ENCODE measurements at regions of chrX and their contacts with region 1.

Region 1: GRCh38 chrX:129982274-129983251 is at the start of gene BCORL1:
- DNase-seq: peak; percentile 62 to 89 (median 84)
- ATAC-seq: peak; percentile 96
- H3K4me3 ChIP-seq: peak within 1 kb of the TSS; percentile 61
- H3K4me3 Mint-ChIP-seq: peak within 1 kb of the TSS in 1 of 10 donors; percentile 85
- H3K27ac ChIP-seq: no peak within 1 kb of the TSS
- H3K27ac Mint-ChIP-seq: peak within 1 kb of the TSS in 7 of 9 donors; percentile 31 to 82 (median 59)
- H3K4me1 ChIP-seq: no peaks in the 10 kb centered on the region
- H3K4me1 Mint-ChIP-seq: peaks cover 19 to 34% (median 27%) of the 10 kb centered on the region in 7 donors
- H3K27me3 ChIP-seq: no peaks in the 10 kb centered on the region
- H3K27me3 Mint-ChIP-seq: peaks cover 0 to 30% (median 0%) of the 10 kb centered on the region in 5 donors
- total RNA-seq, gene BCORL1: 5.8 to 8.9 (median 8.2) TPM

Region 2: GRCh38 chrX:129369232-129369631 is 613.3 kb before region 1 on chrX:
- CTCF ChIA-PET with region 1: no interaction called
- POLR2A ChIA-PET with region 1: no interaction called
- intact Hi-C with region 1: no loop called
- DNase-seq: no peak
- ATAC-seq: no peak
- H3K4me3 ChIP-seq: no peak overlapping the region
- H3K4me3 Mint-ChIP-seq: no peak overlapping the region
- H3K27ac ChIP-seq: no peak overlapping the region
- H3K27ac Mint-ChIP-seq: no peak overlapping the region
- H3K4me1 ChIP-seq: no peaks in the 10 kb centered on the region
- H3K4me1 Mint-ChIP-seq: no peaks in the 10 kb centered on the region
- H3K27me3 ChIP-seq: no peaks in the 10 kb centered on the region
- H3K27me3 Mint-ChIP-seq: no peaks in the 10 kb centered on the region

Region 3: DNA sequence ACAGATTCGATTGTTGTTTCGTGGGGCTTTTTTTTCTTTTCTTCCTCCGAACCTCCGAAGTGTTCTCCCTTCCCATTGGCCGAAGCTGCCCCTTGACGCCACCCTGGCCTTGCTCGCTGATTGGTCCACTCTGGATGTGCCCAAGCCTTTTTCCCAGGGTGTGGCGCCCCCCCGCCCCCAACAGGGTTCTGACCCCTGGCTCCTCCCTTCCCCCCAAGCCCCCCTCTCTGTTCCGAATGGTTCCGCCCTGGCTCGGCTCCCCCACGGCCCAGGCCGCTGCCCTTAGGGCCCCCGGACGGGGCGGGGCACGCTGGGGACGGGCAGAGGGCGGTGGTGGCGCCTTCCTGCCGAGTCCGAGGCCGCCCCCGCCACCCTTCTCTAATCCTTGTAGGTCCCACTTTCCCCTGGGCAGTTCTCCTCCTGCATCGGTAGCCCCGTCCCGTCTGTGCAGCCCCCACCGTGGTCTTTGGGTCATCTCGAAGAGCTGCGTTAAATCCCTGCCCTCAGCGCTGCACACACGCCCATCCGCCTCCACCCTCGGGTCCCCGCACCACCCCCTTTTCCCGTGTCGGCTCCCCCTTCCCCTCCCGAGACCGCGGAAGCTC is 51.0 kb before region 1 on chrX:
- CTCF ChIA-PET with region 1: no interaction called
- POLR2A ChIA-PET with region 1: no interaction called
- intact Hi-C with region 1: loop called (anchors 1 kb)
- DNase-seq: peak; percentile 18 to 58 (median 33)
- ATAC-seq: peak; percentile 75
- H3K4me3 ChIP-seq: peak overlapping the region; percentile 61
- H3K4me3 Mint-ChIP-seq: peak overlapping the region; percentile 66 to 89 (median 80)
- H3K27ac ChIP-seq: peak overlapping the region; percentile 59
- H3K27ac Mint-ChIP-seq: peak overlapping the region; percentile 70 to 92 (median 85)
- H3K4me1 ChIP-seq: no peaks in the 10 kb centered on the region
- H3K4me1 Mint-ChIP-seq: peaks cover 0 to 6% (median 5%) of the 10 kb centered on the region in 7 donors
- H3K27me3 ChIP-seq: no peaks in the 10 kb centered on the region
- H3K27me3 Mint-ChIP-seq: peaks cover 0 to 20% (median 0%) of the 10 kb centered on the region in 5 donors

Region 4: DNA sequence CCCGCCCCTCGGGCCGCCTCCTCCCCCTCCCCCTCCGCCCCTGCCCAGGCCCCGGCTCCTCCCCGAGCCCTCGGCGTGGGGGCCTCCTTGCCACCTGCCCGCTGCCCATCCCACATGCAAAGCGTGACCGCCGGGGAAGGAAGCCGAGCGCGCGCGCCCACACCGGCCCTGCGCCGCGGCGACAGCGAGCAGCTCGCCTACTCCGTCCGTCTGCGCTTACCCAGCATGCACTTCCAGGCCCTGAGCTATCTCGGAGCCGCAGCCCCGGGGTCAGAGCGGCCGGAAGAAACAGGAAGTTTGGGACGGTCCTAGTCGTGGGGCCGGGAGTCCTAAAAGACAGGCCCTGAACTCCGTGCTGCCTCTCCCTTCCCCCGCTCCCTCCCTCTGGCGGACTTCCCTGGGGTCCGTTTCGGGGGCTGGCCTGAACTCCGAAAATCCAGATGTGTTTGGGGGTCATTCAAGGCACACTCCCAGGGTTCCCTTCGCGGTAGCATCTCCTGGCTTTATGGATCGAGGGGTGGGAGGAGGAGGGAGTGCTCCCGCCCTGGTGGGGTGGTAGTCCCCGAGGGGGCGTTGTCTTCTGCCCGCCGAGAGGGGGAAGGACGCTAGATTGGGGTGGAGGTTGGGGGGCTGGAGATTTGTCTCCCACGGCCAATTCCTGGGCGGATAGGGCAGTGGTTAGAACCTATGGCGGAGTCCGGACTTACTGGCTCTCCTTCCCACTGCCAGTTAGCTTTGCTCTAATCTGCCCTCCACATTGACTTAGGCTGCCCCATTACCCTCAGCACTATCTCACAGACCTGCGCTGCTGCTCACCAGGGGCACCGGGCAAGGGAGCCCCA is 25.1 kb before region 1 on chrX:
- CTCF ChIA-PET with region 1: no interaction called
- POLR2A ChIA-PET with region 1: interaction called, 5 read pairs
- intact Hi-C with region 1: loop called (anchors 1 kb)
- DNase-seq: peak in 2 of 9 donors; percentile 8 to 66
- ATAC-seq: peak; percentile 74
- H3K4me3 ChIP-seq: peak overlapping the region; percentile 47
- H3K4me3 Mint-ChIP-seq: peak overlapping the region; percentile 60 to 80 (median 68)
- H3K27ac ChIP-seq: peak overlapping the region; percentile 45
- H3K27ac Mint-ChIP-seq: peak overlapping the region in 7 of 9 donors; percentile 6 to 58 (median 32)
- H3K4me1 ChIP-seq: peaks cover 5 to 12% of the 10 kb centered on the region in 2 donors
- H3K4me1 Mint-ChIP-seq: peaks cover 11 to 31% (median 28%) of the 10 kb centered on the region in 7 donors
- H3K27me3 ChIP-seq: no peaks in the 10 kb centered on the region
- H3K27me3 Mint-ChIP-seq: peaks cover 0 to 8% (median 0%) of the 10 kb centered on the region in 5 donors

Region 5: GRCh38 chrX:130173190-130173895 is 190.8 kb after region 1 on chrX:
- CTCF ChIA-PET with region 1: no interaction called
- POLR2A ChIA-PET with region 1: no interaction called
- intact Hi-C with region 1: loop called (anchors 2 kb)
- DNase-seq: peak in 2 of 9 donors; percentile 16 to 35
- ATAC-seq: peak; percentile 31
- H3K4me3 ChIP-seq: peak overlapping the region; percentile 82
- H3K4me3 Mint-ChIP-seq: peak overlapping the region; percentile 85 to 96 (median 92)
- H3K27ac ChIP-seq: peak overlapping the region; percentile 74
- H3K27ac Mint-ChIP-seq: peak overlapping the region; percentile 86 to 94 (median 88)
- H3K4me1 ChIP-seq: peaks cover 12 to 26% of the 10 kb centered on the region in 2 donors
- H3K4me1 Mint-ChIP-seq: peaks cover 8 to 52% (median 45%) of the 10 kb centered on the region in 7 donors
- H3K27me3 ChIP-seq: no peaks in the 10 kb centered on the region
- H3K27me3 Mint-ChIP-seq: no peaks in the 10 kb centered on the region

Measured in naive thymus-derived CD4-positive, alpha-beta T cell (primary cell).